Spleen (tissue), 13 donors: ENCODE measurements at regions of chr20 and their contacts with region 1.

Region 1: DNA sequence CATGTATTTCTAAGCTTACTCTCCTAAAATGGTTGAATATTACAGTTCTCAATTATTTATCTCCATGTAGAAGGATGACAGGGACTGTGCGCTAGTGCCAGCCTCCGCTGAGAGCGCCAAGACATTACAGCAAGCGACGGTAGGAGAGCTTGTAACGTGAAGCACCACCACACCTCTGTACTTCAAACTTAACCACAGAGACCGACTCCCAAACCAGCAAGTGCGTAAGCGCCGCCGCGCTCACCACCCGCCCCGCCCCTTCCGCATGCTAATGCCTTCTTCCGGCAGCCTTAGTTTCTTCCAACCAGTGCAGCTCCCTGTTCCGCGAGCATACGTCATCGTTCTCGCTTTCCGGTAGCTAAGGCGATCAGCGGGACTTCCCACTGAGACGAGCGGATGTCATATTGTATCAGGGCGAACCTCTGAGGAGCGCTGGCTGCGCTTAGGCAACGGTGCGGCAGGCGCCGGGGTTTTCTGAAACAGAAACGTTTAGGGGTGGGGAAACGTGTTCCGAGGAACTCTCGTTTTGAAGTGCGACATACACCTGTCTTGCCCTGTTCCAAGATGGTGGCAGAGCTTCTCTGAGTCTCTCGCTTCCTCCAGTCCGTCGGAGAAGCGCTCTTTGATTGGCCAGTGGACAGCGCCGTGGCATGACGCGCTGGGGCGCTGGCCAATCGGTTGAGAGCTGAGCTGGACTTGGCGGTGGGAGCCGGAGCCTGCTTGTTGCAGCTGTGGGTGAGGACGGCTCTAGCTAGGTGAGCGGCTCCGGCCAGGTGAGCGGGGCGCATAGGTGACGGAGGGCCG is at the start of gene SEC23B:
- DNase-seq: peak; percentile 99
- H3K4me3 ChIP-seq: peak within 1 kb of the TSS; percentile 60 to 86 (median 66)
- H3K27ac ChIP-seq: peak within 1 kb of the TSS; percentile 96 to 100 (median 98)
- H3K4me1 ChIP-seq: peaks cover 14 to 51% (median 41%) of the 10 kb centered on the region in 6 donors
- H3K27me3 ChIP-seq: peaks cover 0 to 19% (median 0%) of the 10 kb centered on the region in 7 donors
- CTCF ChIP-seq: peak in 1 of 11 experiments; percentile 19
- POLR2A ChIP-seq: peak in 2 of 3 donors; percentile 70 to 77
- total RNA-seq, gene SEC23B: 42.8 to 67.5 (median 56.9) TPM

Region 2: GRCh38 chr20:18566892-18567742 is 59.7 kb after region 1 on chr20 and contains the start of gene SMIM26:
- intact Hi-C with region 1: loop called (anchors 10 kb)
- DNase-seq: peak; percentile 99
- H3K4me3 ChIP-seq: peak within 1 kb of the TSS; percentile 43 to 80 (median 65)
- H3K27ac ChIP-seq: peak within 1 kb of the TSS; percentile 76 to 93 (median 90)
- H3K4me1 ChIP-seq: peaks cover 9 to 36% (median 20%) of the 10 kb centered on the region in 6 donors
- H3K27me3 ChIP-seq: no peaks in the 10 kb centered on the region
- CTCF ChIP-seq: no peak
- POLR2A ChIP-seq: no peak
- total RNA-seq, gene SMIM26: 36.5 to 104 (median 47.7) TPM

Region 3: DNA sequence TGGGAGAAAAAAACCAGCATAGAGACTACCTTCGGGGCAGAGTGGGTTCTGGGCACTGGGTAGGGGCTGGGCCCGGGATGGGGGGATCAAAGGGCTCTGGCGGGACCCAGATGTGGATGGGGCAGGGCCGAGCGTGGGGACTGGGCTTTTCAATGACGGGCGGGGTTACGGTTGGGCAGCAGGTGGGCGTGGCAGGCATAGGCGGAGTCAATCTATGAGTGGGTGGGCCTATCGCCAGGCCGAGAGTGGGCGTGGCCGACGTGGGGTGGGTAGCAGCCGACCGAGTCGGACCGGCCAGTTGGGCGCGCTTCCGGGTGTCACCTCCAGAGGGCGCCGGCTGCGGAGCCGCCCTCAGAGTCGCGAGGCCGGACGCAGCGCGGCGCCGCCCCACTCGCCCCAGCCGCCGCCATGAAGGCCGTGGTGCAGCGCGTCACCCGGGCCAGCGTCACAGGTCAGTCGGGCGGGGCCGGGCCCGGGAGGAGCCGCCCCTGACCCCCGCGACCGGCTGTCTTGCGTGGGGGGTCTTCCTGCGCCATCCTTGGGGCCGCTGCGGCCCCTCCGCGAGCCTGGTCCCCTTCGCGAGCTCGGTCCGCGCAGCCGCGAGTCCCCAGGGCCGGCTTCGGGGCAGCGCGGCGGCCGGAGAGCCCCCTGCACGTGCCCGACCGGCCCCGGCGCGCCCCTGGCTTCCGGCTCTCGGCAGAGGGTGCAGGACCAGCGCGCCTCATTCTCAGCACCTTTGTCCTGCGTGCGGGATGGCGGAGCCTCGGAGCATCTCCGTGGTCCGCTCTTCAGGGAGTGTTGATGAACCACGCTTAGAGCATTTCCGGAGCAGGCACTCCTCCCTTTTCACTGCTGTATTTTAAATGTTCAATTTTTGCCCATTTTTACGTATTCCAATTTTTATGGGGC is 80.5 kb after region 1 on chr20 and contains the start of gene DTD1:
- intact Hi-C with region 1: no loop called
- DNase-seq: peak; percentile 97
- H3K4me3 ChIP-seq: peak within 1 kb of the TSS; percentile 63 to 96 (median 92)
- H3K27ac ChIP-seq: peak within 1 kb of the TSS; percentile 85 to 93 (median 89)
- H3K4me1 ChIP-seq: peaks cover 4 to 38% (median 22%) of the 10 kb centered on the region in 6 donors
- H3K27me3 ChIP-seq: no peaks in the 10 kb centered on the region
- CTCF ChIP-seq: peak in 10 of 11 experiments; percentile 23 to 87 (median 74)
- POLR2A ChIP-seq: no peak
- total RNA-seq, gene DTD1: 18.3 to 29.7 (median 24.6) TPM